ENCODE measurements at regions of chr4 and their contacts with region 1.

Region 1: GRCh38 chr4:52987392-52988056 is 125.4 kb downstream of the RASL11B start:
- DNase-seq: peak; percentile 11
- H3K4me3 ChIP-seq: no peak overlapping the region
- CTCF ChIP-seq: no peak

Region 2: DNA sequence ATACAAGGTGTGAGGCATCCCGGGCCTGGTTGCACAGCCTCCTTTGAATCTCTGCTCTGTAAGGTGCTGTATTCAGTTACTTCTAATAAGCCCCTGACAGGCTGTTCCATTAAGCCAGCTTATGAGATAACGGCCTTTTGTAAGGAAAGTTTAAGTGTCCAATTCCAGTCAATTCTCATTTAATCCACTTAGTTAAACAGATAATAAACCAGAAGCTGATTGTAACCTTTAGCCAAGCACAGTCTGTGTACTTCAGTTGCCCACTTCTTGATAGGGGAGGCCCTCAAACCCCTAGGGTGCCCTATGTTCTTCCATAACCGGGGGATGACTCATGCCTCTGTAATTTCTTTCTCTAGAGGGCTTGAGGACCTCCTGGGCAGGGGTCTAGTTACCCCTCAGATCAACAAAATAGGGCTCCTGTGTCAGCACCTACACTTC is 62.0 kb before region 1 on chr4:
- in situ Hi-C with region 1: loop called (anchors 5 kb)
- DNase-seq: no peak
- H3K4me3 ChIP-seq: no peak overlapping the region
- CTCF ChIP-seq: no peak

Region 3: DNA sequence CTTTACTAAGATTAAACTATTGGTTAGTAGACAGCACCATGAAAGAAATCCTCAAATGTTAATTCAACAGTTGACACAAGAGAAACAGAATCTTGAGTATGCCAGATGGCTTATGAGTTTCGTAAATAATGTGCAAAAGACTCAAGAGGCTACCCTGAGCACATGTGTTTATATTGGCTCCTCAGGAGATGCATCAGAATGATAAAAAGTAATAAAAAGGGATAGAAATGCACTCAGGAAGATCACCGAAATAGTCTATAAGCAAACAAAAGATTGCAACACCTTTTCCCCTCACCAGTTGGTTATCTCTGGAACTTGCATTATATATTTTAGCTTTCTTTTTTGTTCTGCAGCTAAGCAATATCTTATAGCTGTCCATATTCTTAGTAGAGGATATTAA is 293.9 kb after region 1 on chr4:
- in situ Hi-C with region 1: no loop called
- DNase-seq: no peak
- H3K4me3 ChIP-seq: no peak overlapping the region
- CTCF ChIP-seq: no peak